Mammary epithelial cell (primary cell): ENCODE measurements at regions of chr2 and their contacts with region 1.

Region 1: DNA sequence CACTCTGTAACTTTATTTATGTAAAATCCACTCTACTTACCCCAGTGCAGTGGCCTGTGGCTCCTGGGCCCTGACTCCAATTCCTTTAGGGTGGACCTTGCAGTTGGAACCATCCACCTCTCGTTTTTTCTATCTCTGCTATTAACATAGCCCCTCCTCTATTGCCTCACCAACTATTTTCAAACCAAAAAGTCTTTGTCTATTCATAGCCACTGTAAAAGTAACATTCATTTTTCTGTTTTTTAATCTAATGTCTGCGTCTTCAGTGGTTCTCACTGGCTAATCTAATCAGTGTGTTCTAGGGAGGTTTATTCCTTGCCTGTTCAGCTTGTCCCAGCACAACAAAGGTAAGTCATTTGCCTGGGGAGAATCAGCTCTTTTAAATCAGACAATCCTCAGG is at the start of gene SLC4A5:
- DNase-seq: no peak
- H3K4me3 ChIP-seq: no peak within 1 kb of the TSS
- H3K27ac ChIP-seq: no peak within 1 kb of the TSS
- H3K4me1 ChIP-seq: no peaks in the 10 kb centered on the region
- H3K27me3 ChIP-seq: no peaks in the 10 kb centered on the region
- CTCF ChIP-seq: no peak
- total RNA-seq, gene SLC4A5: 0.56 to 1.5 TPM

Region 2: GRCh38 chr2:74304332-74305148 is 38.8 kb before region 1 on chr2:
- CTCF ChIA-PET with region 1: no interaction called
- dilution Hi-C with region 1: loop called (anchors 5 kb)
- in situ Hi-C with region 1: no loop called
- intact Hi-C with region 1: no loop called
- DNase-seq: no peak
- H3K4me3 ChIP-seq: no peak overlapping the region
- H3K27ac ChIP-seq: no peak overlapping the region
- H3K4me1 ChIP-seq: no peaks in the 10 kb centered on the region
- H3K27me3 ChIP-seq: no peaks in the 10 kb centered on the region
- CTCF ChIP-seq: no peak